ENCODE measurements at regions of chr18 and their contacts with region 1.

Region 1: DNA sequence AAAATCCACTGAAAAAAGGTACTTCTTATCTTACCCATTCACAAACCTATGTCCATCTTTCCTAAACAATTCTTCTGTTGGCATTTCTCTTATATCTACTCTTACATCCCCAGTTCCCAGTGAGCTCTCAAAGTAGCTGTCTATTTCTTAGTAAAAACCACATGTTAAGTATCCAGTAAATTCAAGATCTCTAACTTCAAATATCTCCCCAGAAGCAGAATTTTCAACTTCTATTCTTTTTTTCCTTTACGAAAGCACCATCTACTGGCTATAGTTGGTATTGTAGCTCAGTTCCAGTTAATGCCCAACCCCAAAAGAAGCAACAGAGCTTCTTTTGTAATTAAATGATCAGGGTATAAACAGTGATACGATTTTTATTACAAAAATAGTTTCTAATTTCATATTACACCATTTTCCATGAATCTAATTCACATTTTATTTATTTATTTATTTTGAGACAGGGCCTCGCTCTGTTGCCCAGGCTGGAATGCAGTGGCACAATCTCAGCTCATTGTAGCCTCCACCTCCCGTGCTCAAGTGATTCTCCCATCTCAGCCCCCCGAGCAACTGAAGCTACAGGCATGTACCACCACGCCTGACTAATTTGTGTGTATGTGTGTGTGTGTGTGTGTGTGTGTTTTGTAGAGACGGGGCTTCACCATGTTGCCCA is 28.5 kb downstream of the HRH4 start:
- DNase-seq: no peak
- ATAC-seq: peak; percentile 58 to 87 (median 81)
- H3K4me3 ChIP-seq: no peak overlapping the region
- H3K27ac ChIP-seq: no peak overlapping the region
- H3K4me1 ChIP-seq: no peaks in the 10 kb centered on the region
- H3K27me3 ChIP-seq: peaks cover 0 to 4% (median 2%) of the 10 kb centered on the region in 4 donors
- CTCF ChIP-seq: peak; percentile 48 to 82 (median 68)

Region 2: GRCh38 chr18:24354286-24354685 is 134.7 kb before region 1 on chr18:
- intact Hi-C with region 1: loop called (anchors 5 to 10 kb)
- DNase-seq: no peak
- ATAC-seq: no peak
- H3K4me3 ChIP-seq: no peak overlapping the region
- H3K27ac ChIP-seq: no peak overlapping the region
- H3K4me1 ChIP-seq: no peaks in the 10 kb centered on the region
- H3K27me3 ChIP-seq: no peaks in the 10 kb centered on the region
- CTCF ChIP-seq: no peak

Region 3: GRCh38 chr18:24362758-24363157 is 126.2 kb before region 1 on chr18:
- intact Hi-C with region 1: loop called (anchors 5 to 10 kb)
- DNase-seq: no peak
- ATAC-seq: no peak
- H3K4me3 ChIP-seq: no peak overlapping the region
- H3K27ac ChIP-seq: no peak overlapping the region
- H3K4me1 ChIP-seq: no peaks in the 10 kb centered on the region
- H3K27me3 ChIP-seq: no peaks in the 10 kb centered on the region
- CTCF ChIP-seq: no peak